ENCODE measurements at regions of chr6 and their contacts with region 1.

Region 1: GRCh38 chr6:3281631-3282475 is 23.1 kb downstream of the PSMG4 start:
- DNase-seq: peak in 1 of 2 donors; percentile 29
- ATAC-seq: peak in 6 of 8 donors; percentile 17 to 50 (median 38)
- H3K4me3 ChIP-seq: no peak overlapping the region
- H3K27ac ChIP-seq: peak overlapping the region in 8 of 10 donors; percentile 6 to 68 (median 45)
- H3K4me1 ChIP-seq: peaks cover 7 to 31% (median 21%) of the 10 kb centered on the region in 9 donors
- H3K27me3 ChIP-seq: no peaks in the 10 kb centered on the region
- CTCF ChIP-seq: no peak

Region 2: DNA sequence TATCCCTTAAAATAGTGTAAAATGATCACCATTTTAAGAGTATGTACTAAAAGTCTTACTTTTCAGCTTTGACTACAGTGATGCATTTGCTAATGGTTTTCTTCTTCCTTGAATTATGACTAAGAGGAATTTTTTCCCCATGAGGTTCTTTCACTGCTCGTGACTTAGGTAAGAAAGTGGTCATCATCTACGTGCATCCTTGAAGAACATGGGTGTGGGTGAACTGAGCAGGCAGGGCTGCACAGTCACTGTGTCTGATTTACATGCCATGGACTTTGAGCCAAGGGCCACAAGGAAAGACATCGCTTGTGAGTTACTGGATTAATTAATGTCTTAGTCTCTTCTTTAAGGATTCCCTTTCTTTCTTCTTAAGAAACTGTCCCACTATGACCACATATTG is 248.9 kb before region 1 on chr6:
- intact Hi-C with region 1: no loop called
- DNase-seq: no peak
- ATAC-seq: no peak
- H3K4me3 ChIP-seq: no peak overlapping the region
- H3K27ac ChIP-seq: no peak overlapping the region
- H3K4me1 ChIP-seq: peaks cover 0 to 10% (median 0%) of the 10 kb centered on the region in 9 donors
- H3K27me3 ChIP-seq: no peaks in the 10 kb centered on the region
- CTCF ChIP-seq: no peak

Region 3: DNA sequence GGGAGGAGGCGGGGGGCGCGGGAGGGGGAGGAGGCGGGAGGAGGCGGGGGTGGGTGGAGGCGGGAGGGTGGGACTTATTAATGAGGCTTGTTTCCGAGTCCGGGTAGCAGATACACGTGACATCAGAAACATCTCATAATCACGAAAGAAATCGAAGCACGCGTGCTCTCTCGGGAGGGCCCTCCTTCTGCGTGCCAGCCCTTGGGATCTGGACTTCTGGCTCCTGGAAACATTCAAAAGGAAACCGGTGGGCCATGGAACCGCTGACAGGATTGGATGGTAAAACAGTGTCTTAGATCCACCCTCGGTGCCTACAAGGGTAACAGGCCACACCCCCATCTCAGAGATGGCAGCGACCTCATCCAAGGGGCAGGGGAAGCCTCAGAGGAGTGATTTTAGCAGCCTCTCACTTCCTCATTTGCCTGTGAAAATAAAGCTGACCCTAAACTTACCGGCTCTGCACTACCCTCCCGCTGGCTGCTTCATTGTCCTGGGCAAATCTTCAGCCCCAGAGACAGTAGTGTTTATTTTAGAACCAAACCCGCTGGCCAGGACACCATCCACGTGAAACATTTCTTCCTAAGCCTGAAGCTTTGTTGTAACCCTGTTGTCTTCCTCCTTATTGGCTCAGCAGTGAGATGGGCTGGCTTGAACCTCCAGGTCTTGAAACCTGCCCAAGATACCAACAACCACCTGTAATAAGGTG is 74.4 kb after region 1 on chr6:
- intact Hi-C with region 1: loop called in 1 of 10 experiments (anchors 5 kb)
- DNase-seq: peak; percentile 59 to 69
- ATAC-seq: peak; percentile 62 to 81 (median 76)
- H3K4me3 ChIP-seq: peak overlapping the region in 9 of 10 donors; percentile 25 to 54 (median 49)
- H3K27ac ChIP-seq: peak overlapping the region; percentile 80 to 94 (median 89)
- H3K4me1 ChIP-seq: peaks cover 0 to 32% (median 25%) of the 10 kb centered on the region in 9 donors
- H3K27me3 ChIP-seq: no peaks in the 10 kb centered on the region
- CTCF ChIP-seq: no peak

Region 4: DNA sequence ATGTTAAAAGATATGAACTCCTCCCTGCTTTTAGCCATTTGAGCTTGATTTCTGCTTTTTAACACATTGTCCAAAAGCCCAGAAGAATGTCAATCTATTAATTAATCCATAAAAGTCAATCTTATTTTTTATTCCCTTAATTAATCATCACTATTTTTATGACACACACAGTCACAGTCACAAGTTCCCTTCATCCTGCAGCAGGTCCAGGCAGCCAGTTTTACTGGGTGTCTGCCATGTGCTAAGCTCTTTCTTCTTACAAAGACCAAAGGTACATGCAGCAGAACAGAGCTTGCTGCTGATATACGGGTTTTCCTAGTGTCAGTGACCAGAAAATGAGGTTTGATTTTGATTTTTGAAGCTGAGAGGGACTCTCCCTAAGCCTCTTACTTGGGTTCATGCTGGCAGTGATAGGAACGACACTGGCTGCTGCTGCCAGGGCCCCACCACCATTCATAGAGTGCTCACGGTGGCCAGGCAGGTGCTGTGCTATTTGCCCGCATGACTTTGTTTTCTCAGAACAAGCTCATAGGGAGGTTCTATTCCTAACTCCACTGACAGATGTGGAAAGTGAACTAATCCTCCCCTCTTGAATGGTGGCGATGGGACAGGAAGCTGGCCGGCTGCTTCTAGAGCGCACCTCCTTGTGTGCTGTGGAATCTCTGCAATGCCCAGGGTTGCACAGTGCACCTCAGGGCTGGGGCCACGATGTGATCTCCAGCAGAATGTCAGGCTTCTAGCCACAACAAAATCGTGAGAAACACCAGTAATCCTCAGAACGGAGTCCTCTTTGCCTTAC is 228.5 kb after region 1 on chr6:
- intact Hi-C with region 1: loop called in 1 of 10 experiments (anchors 5 kb)
- DNase-seq: no peak
- ATAC-seq: no peak
- H3K4me3 ChIP-seq: no peak overlapping the region
- H3K27ac ChIP-seq: no peak overlapping the region
- H3K4me1 ChIP-seq: peaks cover 0 to 8% (median 0%) of the 10 kb centered on the region in 9 donors
- H3K27me3 ChIP-seq: peaks cover 0 to 12% (median 3%) of the 10 kb centered on the region in 7 donors
- CTCF ChIP-seq: no peak

Region 5: GRCh38 chr6:3887150-3887700 is 605.4 kb after region 1 on chr6:
- intact Hi-C with region 1: loop called in 1 of 10 experiments (anchors 10 kb)
- DNase-seq: peak in 1 of 2 donors; percentile 29
- ATAC-seq: peak in 7 of 8 donors; percentile 10 to 49 (median 37)
- H3K4me3 ChIP-seq: no peak overlapping the region
- H3K27ac ChIP-seq: peak overlapping the region in 1 of 10 donors; percentile 26
- H3K4me1 ChIP-seq: peaks cover 17 to 57% (median 34%) of the 10 kb centered on the region in 9 donors
- H3K27me3 ChIP-seq: no peaks in the 10 kb centered on the region
- CTCF ChIP-seq: peak; percentile 30 to 73 (median 57)

Region 6: DNA sequence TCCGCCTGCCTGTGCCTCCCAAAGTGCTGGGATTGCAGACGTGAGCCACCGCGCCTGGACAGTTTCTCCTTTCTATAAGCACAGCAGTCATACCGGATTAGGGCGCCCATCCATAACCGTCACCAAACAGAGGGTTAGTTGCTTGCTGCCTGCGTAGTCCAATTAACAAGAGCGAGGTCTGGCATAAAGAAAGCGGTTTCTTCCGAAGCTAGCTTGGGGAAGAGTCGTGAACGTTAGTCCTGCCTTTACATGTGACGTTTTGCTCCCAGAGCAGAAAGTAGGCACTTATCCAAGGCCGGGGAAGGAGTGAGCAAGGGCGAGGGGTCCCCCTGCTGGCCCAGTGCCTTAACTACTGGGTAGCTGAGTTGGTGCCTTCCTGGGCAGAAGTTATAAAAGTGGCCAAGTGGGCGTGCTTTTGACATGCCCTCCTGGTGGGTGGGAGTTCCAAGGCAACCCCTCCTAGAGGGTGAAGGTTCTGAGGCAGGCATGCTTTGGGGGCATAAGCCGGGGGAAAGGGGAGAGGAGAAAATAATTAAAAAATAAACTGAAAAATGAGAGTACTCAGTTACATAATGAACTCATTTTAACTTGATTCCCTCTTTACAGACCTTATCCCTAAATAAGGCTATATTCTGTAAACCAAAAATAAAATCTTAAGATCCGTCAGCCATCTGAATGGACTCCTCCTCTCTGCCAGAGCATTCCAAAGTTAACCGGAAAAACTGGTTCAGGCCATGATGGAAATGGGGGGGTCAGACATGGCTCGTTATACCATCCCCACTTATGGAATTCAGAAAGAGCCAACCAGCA is 709.0 kb after region 1 on chr6:
- intact Hi-C with region 1: loop called in 8 of 10 experiments (anchors 5 to 10 kb)
- DNase-seq: peak; percentile 85 to 91
- ATAC-seq: peak; percentile 85 to 97 (median 95)
- H3K4me3 ChIP-seq: peak overlapping the region in 9 of 10 donors; percentile 37 to 57 (median 53)
- H3K27ac ChIP-seq: peak overlapping the region in 8 of 10 donors; percentile 49 to 74 (median 66)
- H3K4me1 ChIP-seq: peaks cover 0 to 25% (median 13%) of the 10 kb centered on the region in 9 donors
- H3K27me3 ChIP-seq: no peaks in the 10 kb centered on the region
- CTCF ChIP-seq: peak; percentile 68 to 94 (median 87)

Measured in heart right ventricle (tissue), 16 donors.